ENCODE measurements at regions of chr14 and their contacts with region 1.

Region 1: DNA sequence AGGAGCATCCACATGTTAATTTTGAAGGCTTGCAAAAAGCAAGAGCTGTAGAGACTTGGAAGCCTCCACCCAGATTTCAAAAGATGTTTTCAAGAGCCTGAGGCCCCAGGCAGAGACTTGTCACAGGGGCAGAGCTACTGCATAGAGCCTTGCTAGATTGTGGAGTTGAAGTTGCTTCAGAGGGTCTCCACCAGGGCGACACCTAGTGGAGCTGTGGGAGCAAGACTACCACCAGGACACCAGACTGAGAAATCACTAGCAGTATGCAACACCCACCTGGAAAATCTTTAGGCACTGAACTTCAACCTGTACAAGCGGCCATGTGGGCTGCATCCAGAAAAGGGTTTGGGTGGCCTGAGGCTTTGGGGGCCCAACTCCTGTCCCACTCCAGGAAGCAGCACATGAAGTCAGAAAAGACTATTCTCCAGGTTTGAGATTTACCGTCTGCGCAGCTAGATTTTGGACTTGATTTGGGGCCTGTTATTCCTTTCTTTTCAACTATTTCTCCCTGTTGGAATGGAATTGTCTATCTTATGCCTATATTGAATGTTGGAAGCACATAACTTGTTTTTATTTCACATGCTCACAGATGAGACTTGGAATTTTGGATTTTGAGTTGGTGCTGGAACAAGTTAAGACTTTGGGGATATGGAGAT is 508.6 kb downstream of the FLRT2 start:
- DNase-seq: no peak
- ATAC-seq: peak; percentile 96
- H3K4me3 ChIP-seq: no peak overlapping the region
- H3K27ac ChIP-seq: no peak overlapping the region
- H3K4me1 ChIP-seq: no peaks in the 10 kb centered on the region
- H3K27me3 ChIP-seq: no peaks in the 10 kb centered on the region
- CTCF ChIP-seq: peak; percentile 57 to 72 (median 61)
- EP300 ChIP-seq: no peak
- POLR2A ChIP-seq: no peak
- RAD21 ChIP-seq: peak; percentile 53

Region 2: DNA sequence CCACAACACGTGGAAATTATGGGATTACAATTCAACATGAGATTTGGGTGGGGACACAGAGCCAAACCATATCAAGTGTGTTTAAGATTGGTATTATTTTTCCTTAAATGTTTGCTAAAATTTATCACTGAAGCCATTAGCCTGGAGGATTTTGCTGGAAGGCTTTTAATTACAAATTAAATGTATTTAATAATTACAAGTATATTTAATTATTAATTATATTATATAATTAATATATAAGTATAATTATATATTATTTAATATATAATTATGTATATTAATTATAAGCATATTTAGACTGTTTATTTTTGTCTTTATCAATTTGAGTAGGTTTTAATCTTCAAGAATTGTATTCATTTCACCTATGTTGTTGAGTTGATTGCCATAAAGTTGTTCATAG is 935.9 kb before region 1 on chr14:
- CTCF ChIA-PET with region 1: no interaction called
- POLR2A ChIA-PET with region 1: no interaction called
- RAD21 ChIA-PET with region 1: no interaction called
- SMC1A ChIA-PET with region 1: no interaction called
- in situ Hi-C with region 1: no loop called
- intact Hi-C with region 1: no loop called
- DNase-seq: no peak
- ATAC-seq: no peak
- H3K4me3 ChIP-seq: no peak overlapping the region
- H3K27ac ChIP-seq: no peak overlapping the region
- H3K4me1 ChIP-seq: no peaks in the 10 kb centered on the region
- H3K27me3 ChIP-seq: no peaks in the 10 kb centered on the region
- CTCF ChIP-seq: no peak
- EP300 ChIP-seq: no peak
- POLR2A ChIP-seq: no peak
- RAD21 ChIP-seq: no peak

Region 3: GRCh38 chr14:85867450-85867849 is 171.1 kb before region 1 on chr14:
- CTCF ChIA-PET with region 1: interaction called, 42 read pairs
- POLR2A ChIA-PET with region 1: no interaction called
- RAD21 ChIA-PET with region 1: interaction called, 10 read pairs
- SMC1A ChIA-PET with region 1: interaction called, 9 read pairs
- in situ Hi-C with region 1: no loop called
- intact Hi-C with region 1: loop called (anchors 5 kb)
- DNase-seq: no peak
- ATAC-seq: peak; percentile 53; the same call in 1 of the 3 replicates
- H3K4me3 ChIP-seq: no peak overlapping the region
- H3K27ac ChIP-seq: no peak overlapping the region
- H3K4me1 ChIP-seq: no peaks in the 10 kb centered on the region
- H3K27me3 ChIP-seq: no peaks in the 10 kb centered on the region
- CTCF ChIP-seq: no peak; a peak in 1 of 6 replicates
- EP300 ChIP-seq: no peak
- POLR2A ChIP-seq: no peak
- RAD21 ChIP-seq: peak; percentile 7; the same call in 1 of the 2 replicates

Region 4: GRCh38 chr14:86022031-86022629 is 16.4 kb before region 1 on chr14:
- CTCF ChIA-PET with region 1: interaction called, 19 read pairs
- POLR2A ChIA-PET with region 1: no interaction called
- RAD21 ChIA-PET with region 1: interaction called, 4 read pairs
- SMC1A ChIA-PET with region 1: interaction called, 3 read pairs
- in situ Hi-C with region 1: no loop called
- intact Hi-C with region 1: no loop called
- DNase-seq: no peak
- ATAC-seq: no peak
- H3K4me3 ChIP-seq: no peak overlapping the region
- H3K27ac ChIP-seq: no peak overlapping the region
- H3K4me1 ChIP-seq: no peaks in the 10 kb centered on the region
- H3K27me3 ChIP-seq: no peaks in the 10 kb centered on the region
- CTCF ChIP-seq: no peak
- EP300 ChIP-seq: no peak
- POLR2A ChIP-seq: no peak
- RAD21 ChIP-seq: no peak

Region 5: GRCh38 chr14:86050072-86050683 is 11.7 kb after region 1 on chr14:
- CTCF ChIA-PET with region 1: interaction called, 20 read pairs
- POLR2A ChIA-PET with region 1: no interaction called
- RAD21 ChIA-PET with region 1: no interaction called
- SMC1A ChIA-PET with region 1: interaction called, 12 read pairs
- in situ Hi-C with region 1: no loop called
- intact Hi-C with region 1: no loop called
- DNase-seq: no peak
- ATAC-seq: no peak
- H3K4me3 ChIP-seq: no peak overlapping the region
- H3K27ac ChIP-seq: no peak overlapping the region
- H3K4me1 ChIP-seq: no peaks in the 10 kb centered on the region
- H3K27me3 ChIP-seq: no peaks in the 10 kb centered on the region
- CTCF ChIP-seq: no peak
- EP300 ChIP-seq: no peak
- POLR2A ChIP-seq: no peak
- RAD21 ChIP-seq: no peak